GM13977 (cell line): ENCODE measurements at regions of chr7 and their contacts with region 1.

Region 1: GRCh38 chr7:17986851-17987250 is 40.8 kb downstream of the PRPS1L1 start:
- DNase-seq: no peak
- CTCF ChIP-seq: no peak

Region 2: DNA sequence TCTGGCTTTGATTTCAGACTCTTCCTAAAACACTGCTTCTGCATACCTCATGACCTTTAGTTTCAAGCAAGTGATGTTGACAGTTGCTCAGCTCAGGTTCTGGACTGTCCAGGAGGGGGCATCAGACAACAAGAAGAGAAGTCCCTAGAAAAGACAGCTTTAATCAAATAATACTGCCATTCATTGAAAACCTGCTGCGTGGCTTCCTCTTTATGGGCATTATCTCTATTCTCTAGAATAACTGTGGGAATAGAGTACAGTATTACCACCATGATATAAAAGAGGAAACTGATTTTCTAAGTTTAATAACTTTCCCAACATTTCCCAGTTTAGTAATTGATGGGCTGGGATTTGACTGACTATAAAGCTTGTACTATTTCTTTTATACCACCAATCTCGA is 216.9 kb before region 1 on chr7:
- in situ Hi-C with region 1: loop called (anchors 10 kb)
- DNase-seq: peak; percentile 39
- CTCF ChIP-seq: peak; percentile 90

Region 3: DNA sequence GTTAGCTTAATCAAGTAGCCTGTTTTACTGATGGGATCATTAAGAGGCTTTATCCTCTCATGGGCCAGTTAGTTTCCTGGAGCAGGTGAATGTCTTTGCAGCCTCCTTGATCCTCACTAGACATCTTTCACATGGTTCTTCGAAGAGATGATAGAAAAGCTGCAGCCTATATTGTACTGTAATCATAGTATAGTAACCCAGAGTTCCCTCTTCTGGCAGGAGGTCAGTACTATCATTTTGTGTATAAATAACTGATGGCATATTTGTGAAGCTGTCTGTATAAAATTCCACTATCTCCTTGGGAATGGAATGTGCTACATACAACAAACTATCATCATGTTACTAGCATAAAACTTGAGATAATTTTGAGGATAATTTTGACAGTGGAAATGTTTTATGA is 164.6 kb after region 1 on chr7:
- in situ Hi-C with region 1: no loop called
- DNase-seq: no peak
- CTCF ChIP-seq: no peak

Region 4: DNA sequence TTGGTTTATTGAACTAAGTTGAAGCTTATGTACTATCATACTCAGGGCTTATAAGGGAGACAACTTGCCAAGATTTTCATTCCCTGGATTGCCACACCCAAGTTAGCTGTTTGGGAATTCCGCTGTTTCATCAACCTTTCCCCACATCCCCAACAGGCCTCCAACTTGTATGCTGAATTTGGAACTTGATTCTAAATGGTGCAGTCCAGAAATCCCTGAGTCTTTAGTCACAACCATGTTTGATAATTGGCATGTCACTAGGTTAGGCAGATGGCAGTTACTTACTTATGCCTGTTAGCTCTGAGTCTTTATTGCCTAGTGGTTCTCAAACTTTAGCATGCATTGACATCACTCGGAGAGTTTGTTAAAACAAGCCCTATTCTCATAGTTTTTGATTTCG is 176.2 kb after region 1 on chr7:
- in situ Hi-C with region 1: no loop called
- DNase-seq: no peak
- CTCF ChIP-seq: no peak